CD4-positive, alpha-beta memory T cell (primary cell): ENCODE measurements at regions of chr3 and their contacts with region 1.

Region 1: GRCh38 chr3:195259475-195260279 is 11.3 kb downstream of the XXYLT1 start:
- DNase-seq: peak; percentile 87 to 94 (median 89)
- H3K4me3 ChIP-seq: peak overlapping the region in 1 of 2 donors; percentile 90
- H3K4me3 Mint-ChIP-seq: peak overlapping the region; percentile 62 to 79 (median 72)
- H3K27ac ChIP-seq: peak overlapping the region; percentile 76
- H3K27ac Mint-ChIP-seq: peak overlapping the region; percentile 75 to 93 (median 84)
- H3K4me1 ChIP-seq: peaks cover 27% of the 10 kb centered on the region
- H3K4me1 Mint-ChIP-seq: peaks cover 8 to 24% (median 14%) of the 10 kb centered on the region in 4 donors
- H3K27me3 ChIP-seq: no peaks in the 10 kb centered on the region
- H3K27me3 Mint-ChIP-seq: no peaks in the 10 kb centered on the region

Region 2: DNA sequence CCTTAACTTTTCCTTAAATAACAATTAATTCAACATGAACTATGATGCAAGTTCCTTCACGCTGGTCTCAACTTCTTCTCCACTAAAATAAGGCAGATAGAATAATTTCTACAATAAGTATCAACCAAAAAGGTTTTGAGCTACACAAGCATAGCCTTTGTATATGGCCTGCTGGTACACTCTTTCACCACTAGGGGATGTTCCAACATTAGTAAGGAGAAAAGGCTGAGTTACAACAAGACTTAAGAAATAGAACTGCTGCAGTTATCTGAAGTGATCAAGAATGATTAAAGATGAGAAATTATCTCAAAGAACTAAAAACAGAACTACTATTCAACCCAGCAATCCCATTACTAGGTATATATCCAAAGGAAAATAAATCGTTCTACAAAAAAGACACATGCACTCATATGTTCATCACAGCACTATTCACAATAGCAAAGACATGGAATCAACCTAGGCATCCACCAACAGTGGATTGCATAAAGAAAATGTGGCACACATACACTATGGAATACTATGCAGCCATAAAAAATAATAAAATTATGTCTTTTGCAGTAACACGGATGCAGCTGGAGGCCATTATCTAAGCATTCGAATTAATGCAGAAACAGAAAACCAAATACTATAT is 787.3 kb before region 1 on chr3:
- CTCF ChIA-PET with region 1: interaction called, 4 read pairs
- POLR2A ChIA-PET with region 1: no interaction called
- intact Hi-C with region 1: loop called (anchors 1 kb)
- DNase-seq: peak; percentile 50 to 62 (median 57)
- H3K4me3 ChIP-seq: no peak overlapping the region
- H3K4me3 Mint-ChIP-seq: no peak overlapping the region
- H3K27ac ChIP-seq: no peak overlapping the region
- H3K27ac Mint-ChIP-seq: peak overlapping the region in 1 of 7 donors; percentile 59
- H3K4me1 ChIP-seq: peaks cover 22% of the 10 kb centered on the region
- H3K4me1 Mint-ChIP-seq: peaks cover 6 to 14% (median 7%) of the 10 kb centered on the region in 4 donors
- H3K27me3 ChIP-seq: no peaks in the 10 kb centered on the region
- H3K27me3 Mint-ChIP-seq: no peaks in the 10 kb centered on the region

Region 3: DNA sequence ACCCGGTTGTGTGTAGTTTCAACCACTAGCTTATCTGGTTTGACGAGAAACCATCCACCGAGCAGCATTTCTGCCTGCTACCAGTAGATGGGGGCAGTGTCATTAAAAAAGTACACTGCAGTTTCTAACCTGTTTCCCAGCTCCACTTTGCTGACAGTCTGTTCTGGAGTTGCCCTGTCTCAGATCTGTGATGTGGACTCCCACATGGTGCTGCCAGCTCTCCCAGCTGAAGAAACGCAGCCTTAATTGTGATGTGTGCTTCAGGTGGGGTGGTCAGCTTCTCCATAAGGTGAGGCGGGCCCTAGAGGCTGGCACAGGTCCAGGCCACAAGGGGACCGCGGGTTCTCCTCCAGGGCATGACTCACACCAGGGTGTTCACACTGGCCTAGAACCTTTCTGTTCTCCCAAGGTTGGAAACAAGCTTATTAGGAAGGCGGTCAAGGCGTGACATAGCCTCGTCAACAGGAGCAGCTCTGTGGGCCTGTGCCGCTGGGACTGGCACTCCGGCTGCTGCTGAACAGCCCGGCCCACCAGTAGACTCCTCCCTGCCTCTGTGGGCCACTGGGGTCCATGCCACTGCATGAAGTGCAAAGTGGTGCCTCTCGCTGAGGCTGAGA is 576.9 kb before region 1 on chr3:
- CTCF ChIA-PET with region 1: interaction called, 48 read pairs
- POLR2A ChIA-PET with region 1: interaction called, 21 read pairs
- intact Hi-C with region 1: loop called (anchors 1 kb)
- DNase-seq: peak; percentile 59 to 74 (median 69)
- H3K4me3 ChIP-seq: no peak overlapping the region
- H3K4me3 Mint-ChIP-seq: peak overlapping the region in 1 of 8 donors; percentile 23
- H3K27ac ChIP-seq: no peak overlapping the region
- H3K27ac Mint-ChIP-seq: peak overlapping the region in 2 of 7 donors; percentile 4 to 62
- H3K4me1 ChIP-seq: peaks cover 35% of the 10 kb centered on the region
- H3K4me1 Mint-ChIP-seq: peaks cover 16 to 42% (median 29%) of the 10 kb centered on the region in 4 donors
- H3K27me3 ChIP-seq: no peaks in the 10 kb centered on the region
- H3K27me3 Mint-ChIP-seq: no peaks in the 10 kb centered on the region

Region 4: DNA sequence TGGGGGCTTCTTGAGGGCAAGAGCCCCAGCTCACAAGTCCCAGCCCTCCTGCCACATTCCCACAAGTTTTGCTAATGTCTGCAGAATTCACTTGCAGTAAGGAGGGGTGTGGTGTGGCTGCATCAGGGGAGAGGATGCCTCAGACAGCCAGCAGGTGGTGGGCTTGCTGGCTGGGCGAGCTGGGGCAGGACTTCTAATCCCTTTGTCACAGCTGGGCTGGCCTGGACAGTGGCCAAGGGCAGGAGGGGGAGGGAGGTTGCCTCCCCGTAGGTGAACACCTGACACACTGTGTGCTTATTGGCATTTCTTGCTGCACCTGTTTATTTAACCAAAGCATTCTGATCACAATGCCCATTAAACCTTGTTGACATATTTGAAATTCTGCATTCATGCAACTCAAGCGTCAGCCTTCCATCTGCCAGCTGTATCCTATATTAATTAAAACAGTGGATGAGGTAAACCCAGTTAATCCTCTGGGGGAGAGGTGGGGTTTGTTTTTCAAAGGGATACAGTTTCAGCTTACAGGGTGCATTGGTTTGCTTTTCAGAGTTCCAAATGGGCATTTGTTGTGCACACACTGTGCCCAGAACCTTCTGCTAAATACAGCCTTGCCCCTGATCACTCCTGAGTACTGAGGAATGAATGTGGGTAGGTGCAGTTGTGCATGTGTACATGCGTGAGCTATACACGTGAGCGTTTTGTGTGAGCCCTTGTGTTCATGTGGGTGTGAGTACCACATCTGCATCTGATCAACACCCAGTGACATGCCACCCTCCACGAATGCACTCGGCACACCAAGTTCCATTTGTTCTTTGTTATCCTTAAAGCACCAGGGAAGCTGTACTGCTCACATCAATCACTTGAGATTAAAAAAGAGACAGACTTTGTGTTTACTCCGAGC is 257.5 kb before region 1 on chr3:
- CTCF ChIA-PET with region 1: interaction called, 3 read pairs
- POLR2A ChIA-PET with region 1: interaction called, 4 read pairs
- intact Hi-C with region 1: loop called (anchors 1 kb)
- DNase-seq: peak in 1 of 5 donors; percentile 4
- H3K4me3 ChIP-seq: no peak overlapping the region
- H3K4me3 Mint-ChIP-seq: no peak overlapping the region
- H3K27ac ChIP-seq: no peak overlapping the region
- H3K27ac Mint-ChIP-seq: no peak overlapping the region
- H3K4me1 ChIP-seq: no peaks in the 10 kb centered on the region
- H3K4me1 Mint-ChIP-seq: no peaks in the 10 kb centered on the region
- H3K27me3 ChIP-seq: no peaks in the 10 kb centered on the region
- H3K27me3 Mint-ChIP-seq: peaks cover 11 to 17% of the 10 kb centered on the region in 2 donors